Activated CD4-positive, alpha-beta memory T cell treated with anti-CD3 and anti-CD28 coated beads, Interleukin-2, amount 10 ng/mL, durations not matched to agents 7 days and 5 days (primary cell): ENCODE measurements at regions of chr1 and their contacts with region 1.

Region 1: DNA sequence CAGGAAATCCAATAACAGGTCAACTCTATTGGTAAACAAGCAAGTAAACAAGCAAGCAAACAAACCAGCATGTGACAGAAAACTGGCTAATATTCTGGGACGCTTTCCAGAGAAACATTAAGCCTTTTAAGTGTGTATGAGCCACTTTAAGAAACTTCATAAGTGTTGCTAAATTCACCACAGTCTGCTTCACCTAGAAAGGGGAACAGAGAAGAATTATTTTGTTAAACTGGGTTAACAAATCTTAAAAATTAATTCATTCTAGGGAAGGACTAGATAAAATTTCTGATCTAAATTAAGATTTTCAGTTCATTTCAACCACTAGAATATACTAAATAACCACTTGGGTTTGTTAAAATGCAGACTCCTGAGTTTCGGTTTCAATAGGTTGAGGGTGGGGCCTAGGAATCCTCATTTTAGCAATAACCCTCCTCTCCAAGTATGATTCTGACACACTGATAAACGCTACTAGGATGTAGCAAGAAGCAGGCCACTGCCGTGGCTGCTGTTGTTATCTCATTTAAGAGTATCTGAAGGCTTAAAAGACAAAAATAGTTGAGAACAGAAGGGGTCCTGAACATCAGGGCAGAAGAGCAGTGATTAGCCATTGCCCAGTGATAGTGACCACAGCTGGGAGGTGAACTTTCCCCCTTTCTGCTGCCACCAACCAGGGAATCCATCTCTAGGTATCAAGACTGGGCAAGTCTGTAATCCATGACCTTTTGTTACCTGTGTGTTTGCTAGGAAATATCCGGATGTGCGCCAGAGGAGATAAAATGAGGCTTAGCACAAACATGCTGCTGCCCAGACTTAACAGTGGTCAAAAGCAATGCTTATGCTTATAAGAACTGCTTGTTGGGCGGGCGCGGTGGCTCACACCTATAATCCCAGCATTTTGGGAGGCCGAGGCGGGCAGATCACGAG is 11.2 kb downstream of the CREG1 start:
- DNase-seq: peak; percentile 43
- H3K4me3 Mint-ChIP-seq: peak overlapping the region; percentile 15
- H3K27ac Mint-ChIP-seq: peak overlapping the region; percentile 90
- H3K4me1 Mint-ChIP-seq: peaks cover 68% of the 10 kb centered on the region
- H3K27me3 Mint-ChIP-seq: no peaks in the 10 kb centered on the region

Region 2: GRCh38 chr1:167263819-167264464 is 278.4 kb before region 1 on chr1:
- CTCF ChIA-PET with region 1: interaction called, 14 read pairs
- POLR2A ChIA-PET with region 1: no interaction called
- DNase-seq: no peak
- H3K4me3 Mint-ChIP-seq: no peak overlapping the region
- H3K27ac Mint-ChIP-seq: no peak overlapping the region
- H3K4me1 Mint-ChIP-seq: peaks cover 20% of the 10 kb centered on the region
- H3K27me3 Mint-ChIP-seq: no peaks in the 10 kb centered on the region

Region 3: DNA sequence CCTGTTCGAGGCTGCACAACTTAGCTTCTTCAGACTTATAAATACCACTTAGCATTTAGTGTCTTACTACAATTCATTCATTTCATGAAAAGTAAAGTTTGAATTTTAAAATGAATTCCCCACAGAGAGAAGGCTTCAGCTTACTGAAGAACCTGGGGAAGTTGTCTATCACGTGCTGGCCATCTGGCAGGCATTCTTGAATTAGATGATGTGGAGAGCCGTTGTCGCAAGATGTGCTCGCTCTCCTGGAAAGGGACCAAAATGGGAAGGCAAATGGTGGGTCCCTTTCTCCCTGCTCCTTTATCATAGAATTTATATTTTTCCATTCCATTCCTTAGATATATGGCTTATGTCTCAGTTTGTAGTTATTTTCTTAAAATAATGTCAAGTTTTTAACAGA is 114.5 kb before region 1 on chr1:
- CTCF ChIA-PET with region 1: interaction called, 11 read pairs
- POLR2A ChIA-PET with region 1: interaction called, 3 read pairs
- DNase-seq: no peak
- H3K4me3 Mint-ChIP-seq: no peak overlapping the region
- H3K27ac Mint-ChIP-seq: peak overlapping the region; percentile 72
- H3K4me1 Mint-ChIP-seq: peaks cover 28% of the 10 kb centered on the region
- H3K27me3 Mint-ChIP-seq: no peaks in the 10 kb centered on the region

Region 4: DNA sequence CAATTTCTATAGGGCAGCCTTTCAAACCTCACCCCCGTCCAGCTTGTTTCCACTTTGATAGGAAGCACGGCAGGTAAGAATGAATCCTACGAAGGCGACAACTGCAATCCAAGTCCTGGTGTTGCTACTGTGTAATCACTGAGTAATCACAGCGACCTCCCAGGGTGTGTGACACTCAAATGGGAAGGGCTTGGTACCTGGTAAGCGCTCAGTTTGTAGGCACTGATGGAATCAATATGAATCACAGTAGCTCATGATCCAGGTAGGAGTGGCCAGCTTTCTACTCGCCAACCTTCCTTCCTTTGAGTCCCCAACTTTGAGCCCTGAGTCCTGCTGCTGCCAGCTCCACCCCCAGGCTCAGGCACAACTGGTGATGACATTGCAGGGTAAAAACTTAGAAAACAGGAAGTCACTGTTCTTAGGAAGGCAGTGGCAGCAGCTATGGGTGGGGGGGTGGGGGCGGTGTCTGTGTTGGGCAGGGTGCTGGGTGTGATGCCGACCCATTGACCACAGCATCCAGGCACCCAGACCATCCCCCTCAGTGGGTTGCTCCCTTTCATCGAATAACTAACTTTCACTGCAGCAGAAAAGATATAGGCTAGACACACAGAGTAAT is 94.7 kb before region 1 on chr1:
- CTCF ChIA-PET with region 1: interaction called, 15 read pairs
- POLR2A ChIA-PET with region 1: no interaction called
- DNase-seq: peak; percentile 84
- H3K4me3 Mint-ChIP-seq: peak overlapping the region; percentile 28
- H3K27ac Mint-ChIP-seq: peak overlapping the region; percentile 97
- H3K4me1 Mint-ChIP-seq: peaks cover 85% of the 10 kb centered on the region
- H3K27me3 Mint-ChIP-seq: no peaks in the 10 kb centered on the region

Region 5: DNA sequence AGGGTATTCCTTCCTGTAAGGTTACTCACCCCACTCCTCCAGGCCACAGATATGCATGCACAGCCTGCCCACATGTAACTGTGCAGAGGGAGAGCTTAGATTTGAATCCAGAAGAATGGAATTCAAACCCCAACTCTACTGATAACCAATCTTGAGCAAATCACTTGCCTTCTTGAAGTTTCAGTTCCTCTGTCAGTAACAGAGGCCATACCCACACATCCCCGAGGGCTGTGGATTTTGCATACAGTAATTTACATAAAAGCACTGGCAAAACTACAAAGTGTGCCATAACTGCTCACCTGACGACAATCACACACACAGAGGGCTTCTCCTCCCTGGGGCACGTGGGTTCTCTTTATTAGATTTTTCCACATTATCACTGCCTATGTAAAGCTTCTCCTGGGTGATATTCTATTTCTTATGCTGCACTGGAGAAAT is 42.7 kb before region 1 on chr1:
- CTCF ChIA-PET with region 1: interaction called, 11 read pairs
- POLR2A ChIA-PET with region 1: interaction called, 3 read pairs
- DNase-seq: peak; percentile 41
- H3K4me3 Mint-ChIP-seq: peak overlapping the region; percentile 5
- H3K27ac Mint-ChIP-seq: peak overlapping the region; percentile 86
- H3K4me1 Mint-ChIP-seq: peaks cover 96% of the 10 kb centered on the region
- H3K27me3 Mint-ChIP-seq: no peaks in the 10 kb centered on the region

Region 6: GRCh38 chr1:167524651-167525050 is 17.7 kb before region 1 on chr1:
- CTCF ChIA-PET with region 1: interaction called, 53 read pairs
- POLR2A ChIA-PET with region 1: interaction called, 3 read pairs
- DNase-seq: no peak
- H3K4me3 Mint-ChIP-seq: no peak overlapping the region
- H3K27ac Mint-ChIP-seq: no peak overlapping the region
- H3K4me1 Mint-ChIP-seq: peaks cover 11% of the 10 kb centered on the region
- H3K27me3 Mint-ChIP-seq: peaks cover 18% of the 10 kb centered on the region

Region 7: GRCh38 chr1:167599957-167600581 is 57.7 kb after region 1 on chr1:
- CTCF ChIA-PET with region 1: interaction called, 12 read pairs
- POLR2A ChIA-PET with region 1: no interaction called
- DNase-seq: peak; percentile 51
- H3K4me3 Mint-ChIP-seq: peak overlapping the region; percentile 40
- H3K27ac Mint-ChIP-seq: peak overlapping the region; percentile 36
- H3K4me1 Mint-ChIP-seq: peaks cover 42% of the 10 kb centered on the region
- H3K27me3 Mint-ChIP-seq: no peaks in the 10 kb centered on the region